Endothelial cell of umbilical vein (primary cell): ENCODE measurements at regions of chr12 and their contacts with region 1.

Region 1: GRCh38 chr12:109393437-109394345 is 46.0 kb downstream of the MYO1H start:
- DNase-seq: peak; percentile 63
- H3K4me3 ChIP-seq: no peak overlapping the region
- H3K27ac ChIP-seq: no peak overlapping the region
- H3K4me1 ChIP-seq: no peaks in the 10 kb centered on the region
- H3K27me3 ChIP-seq: no peaks in the 10 kb centered on the region
- CTCF ChIP-seq: peak; percentile 86 to 91
- POLR2A ChIP-seq: no peak

Region 2: DNA sequence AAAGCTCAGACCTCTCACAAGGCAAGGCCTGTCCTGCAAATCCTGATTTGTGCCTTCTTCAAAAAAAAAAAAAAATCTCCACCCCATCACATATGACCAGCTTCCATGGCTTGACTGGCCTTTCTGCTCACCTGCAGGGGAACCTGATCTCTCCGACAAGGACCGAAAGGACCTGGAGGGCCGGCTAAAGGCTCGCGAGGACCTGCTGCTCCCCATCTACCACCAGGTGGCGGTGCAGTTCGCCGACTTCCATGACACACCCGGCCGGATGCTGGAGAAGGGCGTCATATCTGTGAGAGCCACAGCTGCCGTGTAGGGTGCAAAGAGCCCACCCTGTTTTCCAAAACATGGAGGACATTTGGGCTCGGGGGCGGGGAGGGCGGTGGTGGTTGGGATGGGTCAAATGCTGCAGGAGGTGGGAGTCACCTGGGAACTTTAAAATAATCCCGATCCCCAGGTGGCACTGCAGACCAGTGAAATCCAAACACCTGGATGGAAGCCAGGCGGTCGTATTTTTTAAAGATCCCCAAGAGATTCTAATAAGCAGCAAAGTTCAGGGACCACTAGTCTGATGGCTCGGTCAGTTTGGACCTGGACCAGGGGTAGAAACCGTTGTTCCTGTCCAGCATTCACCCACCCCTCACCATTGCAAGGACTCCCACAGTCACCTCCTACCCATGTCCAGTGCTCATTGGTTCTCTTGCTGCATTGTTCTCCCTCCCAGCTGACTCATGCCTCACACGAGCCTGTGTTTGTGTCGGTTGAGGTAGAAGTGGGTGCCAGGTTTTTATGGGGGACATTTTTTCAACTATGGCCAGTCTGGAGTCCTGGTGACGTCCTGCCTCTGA is 129.4 kb before region 1 on chr12:
- CTCF ChIA-PET with region 1: interaction called, 46 read pairs
- POLR2A ChIA-PET with region 1: no interaction called
- dilution Hi-C with region 1: no loop called
- intact Hi-C with region 1: no loop called
- DNase-seq: peak; percentile 40
- H3K4me3 ChIP-seq: no peak overlapping the region
- H3K27ac ChIP-seq: no peak overlapping the region
- H3K4me1 ChIP-seq: no peaks in the 10 kb centered on the region
- H3K27me3 ChIP-seq: no peaks in the 10 kb centered on the region
- CTCF ChIP-seq: peak; percentile 86 to 91
- POLR2A ChIP-seq: no peak

Region 3: GRCh38 chr12:109369831-109370230 is 23.9 kb before region 1 on chr12:
- CTCF ChIA-PET with region 1: interaction called, 10 read pairs
- POLR2A ChIA-PET with region 1: no interaction called
- dilution Hi-C with region 1: no loop called
- intact Hi-C with region 1: no loop called
- DNase-seq: no peak
- H3K4me3 ChIP-seq: no peak overlapping the region
- H3K27ac ChIP-seq: no peak overlapping the region
- H3K4me1 ChIP-seq: no peaks in the 10 kb centered on the region
- H3K27me3 ChIP-seq: peaks cover 0 to 2% of the 10 kb centered on the region in 2 experiments
- CTCF ChIP-seq: no peak
- POLR2A ChIP-seq: no peak

Region 4: GRCh38 chr12:109421355-109422087 is 27.8 kb after region 1 on chr12:
- CTCF ChIA-PET with region 1: interaction called, 10 read pairs
- POLR2A ChIA-PET with region 1: no interaction called
- dilution Hi-C with region 1: no loop called
- intact Hi-C with region 1: no loop called
- DNase-seq: no peak
- H3K4me3 ChIP-seq: no peak overlapping the region
- H3K27ac ChIP-seq: no peak overlapping the region
- H3K4me1 ChIP-seq: no peaks in the 10 kb centered on the region
- H3K27me3 ChIP-seq: peaks cover 0 to 2% of the 10 kb centered on the region in 2 experiments
- CTCF ChIP-seq: no peak
- POLR2A ChIP-seq: no peak